Activated T-helper 2 cell treated with anti-CD3 and anti-CD28 coated beads, Interferon-gamma antibody, Interleukin-2, Interleukin-4, amounts not matched to agents 10 μg/mL and 5 μg/mL and 100 μg/mL, durations not matched to agents 14 hours and 24 hours and 36 hours (primary cell): ENCODE measurements at regions of chr10 and their contacts with region 1.

Region 1: GRCh38 chr10:102072673-102073527 is 7.8 kb downstream of the HPS6 start:
- DNase-seq: peak; percentile 67
- H3K4me3 Mint-ChIP-seq: no peak overlapping the region
- H3K27ac Mint-ChIP-seq: no peak overlapping the region
- H3K4me1 Mint-ChIP-seq: no peaks in the 10 kb centered on the region
- H3K27me3 Mint-ChIP-seq: no peaks in the 10 kb centered on the region

Region 2: GRCh38 chr10:101889256-101890210 is 183.4 kb before region 1 on chr10:
- intact Hi-C with region 1: loop called (anchors 1 kb)
- DNase-seq: peak; percentile 53
- H3K4me3 Mint-ChIP-seq: no peak overlapping the region
- H3K27ac Mint-ChIP-seq: no peak overlapping the region
- H3K4me1 Mint-ChIP-seq: peaks cover 3% of the 10 kb centered on the region
- H3K27me3 Mint-ChIP-seq: no peaks in the 10 kb centered on the region

Region 3: GRCh38 chr10:101920546-101920945 is 152.4 kb before region 1 on chr10:
- intact Hi-C with region 1: no loop called
- DNase-seq: no peak
- H3K4me3 Mint-ChIP-seq: no peak overlapping the region
- H3K27ac Mint-ChIP-seq: no peak overlapping the region
- H3K4me1 Mint-ChIP-seq: peaks cover 5% of the 10 kb centered on the region
- H3K27me3 Mint-ChIP-seq: no peaks in the 10 kb centered on the region

Region 4: GRCh38 chr10:102001435-102002068 is 71.3 kb before region 1 on chr10:
- intact Hi-C with region 1: no loop called
- DNase-seq: no peak
- H3K4me3 Mint-ChIP-seq: no peak overlapping the region
- H3K27ac Mint-ChIP-seq: peak overlapping the region; percentile 48
- H3K4me1 Mint-ChIP-seq: peaks cover 17% of the 10 kb centered on the region
- H3K27me3 Mint-ChIP-seq: no peaks in the 10 kb centered on the region